GM18951 (cell line): ENCODE measurements at regions of chr12 and their contacts with region 1.

Region 1: GRCh38 chr12:13864081-13864673 is 117.2 kb downstream of the GRIN2B start:
- POLR2A ChIP-seq: no peak

Region 2: GRCh38 chr12:13680916-13681315 is 183.3 kb before region 1 on chr12:
- in situ Hi-C with region 1: no loop called
- POLR2A ChIP-seq: no peak

Region 3: DNA sequence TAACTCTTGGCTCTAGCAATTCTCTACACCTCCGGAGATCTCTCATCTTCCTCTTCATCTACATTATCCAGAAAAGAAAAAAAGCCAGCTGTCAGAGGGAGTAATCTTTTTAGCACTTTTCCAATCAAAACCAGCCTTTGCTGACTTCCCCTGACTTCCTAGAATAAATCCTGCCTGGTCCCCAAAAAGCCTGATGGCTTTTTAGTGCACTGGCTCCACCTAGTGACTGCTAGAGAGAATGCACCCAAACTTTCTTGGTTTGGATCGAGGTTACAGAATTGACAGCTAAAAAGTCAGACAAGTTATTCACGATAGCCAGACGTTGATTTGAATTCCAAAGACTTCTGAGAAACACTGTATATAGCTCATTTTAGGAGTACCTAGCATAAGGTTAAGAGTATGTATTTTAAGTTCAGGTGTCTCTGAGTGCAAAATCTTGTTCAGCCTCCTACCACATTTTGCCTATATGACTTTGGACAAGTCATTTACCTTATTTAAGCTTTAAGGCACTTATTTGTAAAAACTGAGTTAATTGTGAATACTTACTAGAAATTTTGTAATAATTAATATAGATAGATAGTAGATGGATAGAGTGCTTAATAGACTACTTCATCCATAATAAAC is 302.9 kb after region 1 on chr12:
- in situ Hi-C with region 1: loop called (anchors 10 kb)
- POLR2A ChIP-seq: no peak